Right ventricle myocardium inferior (tissue), 1 donor: ENCODE measurements at regions of chr1 and their contacts with region 1.

Region 1: DNA sequence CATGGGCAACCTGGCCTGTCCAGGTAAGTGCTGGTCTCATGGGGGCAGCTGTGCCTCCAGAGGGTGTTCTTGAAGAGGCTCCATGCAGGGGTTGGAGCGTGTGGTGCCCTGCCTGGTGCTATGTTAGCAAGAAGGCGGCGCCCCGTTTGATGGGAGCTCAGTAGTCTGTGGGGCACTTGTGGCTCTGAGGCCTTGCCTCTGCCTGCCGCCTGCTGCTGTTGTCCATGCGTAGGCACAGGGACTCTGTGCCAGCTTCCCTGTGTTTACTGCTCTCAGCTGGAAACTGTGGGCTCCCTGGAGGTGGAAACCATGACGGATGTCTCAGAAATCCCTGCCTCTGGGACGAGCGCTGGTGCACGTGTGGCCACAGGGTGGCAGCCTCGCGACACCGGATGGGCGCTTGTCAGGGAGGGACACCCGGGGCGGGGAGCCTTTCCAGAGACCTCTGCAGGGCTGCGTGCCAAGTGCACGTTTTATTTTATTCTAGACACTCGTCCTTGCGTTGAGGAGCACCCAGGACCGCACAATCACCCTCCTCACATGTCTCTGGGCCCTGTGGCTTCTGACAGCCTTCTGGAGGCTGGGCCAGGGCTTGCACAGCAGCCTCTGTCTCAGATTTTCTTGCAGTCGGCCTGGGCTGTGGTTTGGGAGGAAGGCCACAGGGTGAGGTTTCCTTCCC is 27.1 kb downstream of the SNAP47 start:
- DNase-seq: peak; percentile 92
- ATAC-seq: peak; percentile 87

Region 2: DNA sequence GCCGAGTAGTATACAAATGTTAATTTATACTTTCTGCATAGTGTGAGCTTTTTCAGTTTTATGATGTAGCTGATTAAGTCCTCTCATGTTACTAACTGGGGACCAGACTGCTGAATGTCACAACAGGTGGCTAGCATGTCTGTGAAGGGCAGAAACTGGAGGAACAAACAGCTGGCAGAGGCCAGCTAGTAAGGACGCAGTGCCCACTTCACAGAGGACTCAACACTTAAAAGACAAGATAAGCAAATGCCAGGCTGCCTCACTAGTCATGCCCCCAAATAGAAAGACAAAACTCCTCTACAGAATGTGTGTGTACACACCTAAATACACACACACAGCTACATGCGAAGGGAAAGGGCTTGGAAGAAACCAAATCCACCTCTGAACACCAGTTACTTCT is 272.8 kb before region 1 on chr1:
- intact Hi-C with region 1: loop called (anchors 10 kb)
- DNase-seq: no peak
- ATAC-seq: peak; percentile 90

Region 3: GRCh38 chr1:227946624-227947385 is 184.4 kb after region 1 on chr1:
- intact Hi-C with region 1: loop called (anchors 1 kb)
- DNase-seq: peak; percentile 83
- ATAC-seq: peak; percentile 84

Region 4: DNA sequence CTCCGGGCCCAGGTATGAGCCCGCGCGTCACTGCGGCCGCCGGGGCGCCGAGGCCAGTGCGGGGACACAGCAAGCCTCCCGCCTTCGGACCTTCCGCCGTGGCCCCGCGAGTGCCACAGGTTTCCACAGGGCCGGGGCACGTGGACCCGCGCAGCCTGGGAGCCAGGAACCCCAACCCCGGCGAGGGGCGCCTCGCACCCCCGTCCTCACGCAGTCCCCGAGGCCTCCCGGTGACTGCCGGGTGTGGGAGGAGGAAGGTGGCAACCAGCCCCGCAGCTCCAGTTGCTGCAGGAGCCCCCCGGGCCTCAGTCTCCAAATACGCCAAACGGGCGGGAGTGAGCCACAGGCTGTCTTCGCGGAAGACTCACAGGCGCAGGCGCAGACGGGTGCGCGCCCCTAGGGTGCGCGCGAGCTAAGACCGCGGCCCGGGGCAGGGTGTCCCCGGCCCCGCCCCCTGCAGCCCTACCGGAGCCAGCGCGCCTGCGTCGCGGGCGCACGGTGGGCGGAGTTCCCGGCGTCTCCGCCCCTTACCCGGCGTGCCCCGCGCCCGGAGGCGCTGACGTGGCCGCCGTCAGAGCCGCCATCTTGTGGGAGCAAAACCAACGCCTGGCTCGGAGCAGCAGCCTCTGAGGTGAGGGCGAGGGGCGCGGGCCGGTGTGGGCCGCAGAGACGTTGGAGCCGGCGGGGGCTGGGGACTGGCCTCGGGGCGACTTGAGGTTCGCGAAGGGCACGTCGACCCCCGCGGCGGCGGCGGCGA is 319.9 kb after region 1 on chr1 and contains the start of gene ARF1:
- intact Hi-C with region 1: loop called (anchors 10 kb)
- DNase-seq: peak; percentile 97
- ATAC-seq: peak; percentile 97
- total RNA-seq, gene ARF1: 281 TPM